ENCODE measurements at regions of chr14 and their contacts with region 1.

Region 1: DNA sequence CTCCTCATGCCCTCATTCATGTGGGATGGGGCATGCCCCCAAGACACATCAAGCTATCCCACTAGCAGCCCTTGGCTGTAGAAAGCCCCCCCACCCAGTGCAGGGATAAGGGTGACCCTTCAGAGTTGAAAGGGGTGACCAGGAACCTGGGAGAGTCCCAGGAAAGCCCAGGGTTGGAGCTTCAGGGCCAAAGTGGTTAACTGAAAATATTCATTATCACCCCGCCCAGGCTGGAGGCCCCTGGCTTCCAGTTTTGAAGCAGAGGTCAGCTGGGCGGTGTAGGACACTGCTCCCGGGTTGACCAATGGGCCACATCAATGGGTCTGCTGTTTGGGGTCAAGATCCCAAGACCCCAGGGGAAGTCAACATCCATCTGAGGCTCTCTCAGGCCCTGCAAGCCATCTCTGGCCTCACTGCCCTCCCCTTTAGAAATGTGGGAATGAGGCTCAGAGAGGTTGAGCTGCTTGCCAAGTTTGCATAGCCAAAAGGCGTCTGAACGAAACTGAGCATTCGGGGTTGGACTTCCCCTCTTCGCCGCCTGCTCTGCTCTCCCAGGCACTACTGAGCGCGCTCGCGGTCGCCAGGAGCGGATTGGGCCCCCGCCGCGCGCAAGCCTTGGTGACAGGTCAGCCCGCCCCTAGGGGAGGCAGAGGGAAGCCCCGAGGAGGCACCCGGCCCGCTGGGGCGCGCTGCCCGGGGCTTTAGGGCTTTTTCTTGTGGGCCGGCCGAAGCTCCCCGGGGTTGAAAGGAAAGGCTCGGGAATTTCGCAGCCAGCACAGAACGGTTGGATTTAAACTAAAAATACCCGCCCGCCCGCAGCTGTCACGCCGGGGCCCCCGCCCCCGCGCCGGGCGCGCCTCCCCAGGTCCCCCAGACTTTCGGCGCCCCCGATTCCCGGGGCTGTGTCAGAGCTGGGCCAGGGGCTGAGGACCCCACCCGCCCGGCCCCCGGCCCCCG is 576 bp downstream of the SYNE3 start:
- DNase-seq: peak; percentile 77 to 80
- ATAC-seq: peak; percentile 61 to 82 (median 76)
- H3K4me3 ChIP-seq: peak overlapping the region; percentile 36 to 86 (median 80)
- H3K27ac ChIP-seq: peak overlapping the region; percentile 67 to 95 (median 92)
- H3K4me1 ChIP-seq: peaks cover 24 to 78% (median 59%) of the 10 kb centered on the region in 9 donors
- H3K27me3 ChIP-seq: no peaks in the 10 kb centered on the region
- CTCF ChIP-seq: peak; percentile 16 to 58 (median 41)

Region 2: DNA sequence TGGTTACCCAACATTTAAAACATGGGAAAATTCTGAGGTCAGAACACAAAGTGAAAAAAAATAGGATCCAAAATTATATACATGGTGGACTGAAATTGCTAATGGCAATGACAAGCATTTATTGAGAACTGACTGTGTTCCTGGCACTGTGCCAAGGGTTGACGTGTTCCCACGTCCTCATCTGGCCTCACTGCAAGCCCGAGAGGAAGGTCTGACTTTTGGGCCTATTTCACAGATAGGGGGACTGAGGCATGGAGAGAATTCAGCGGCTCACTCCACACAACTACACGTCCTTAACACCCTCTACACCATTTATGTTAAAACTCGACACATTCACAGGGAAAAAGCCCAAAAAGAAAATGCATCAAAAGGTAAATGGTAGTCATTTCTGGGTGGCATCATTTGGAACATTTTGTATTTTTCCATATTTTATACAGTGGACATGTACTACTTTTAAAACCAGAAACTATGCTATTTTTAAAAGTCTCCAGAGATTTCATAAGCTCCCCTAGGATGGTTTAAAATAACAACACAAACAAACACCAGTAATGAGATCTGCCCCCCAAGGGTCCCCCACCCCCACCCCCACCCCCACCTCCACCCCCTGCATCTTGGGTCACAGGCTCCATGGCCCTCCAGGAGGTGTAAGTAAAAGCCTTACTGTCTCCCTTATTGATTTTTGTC is 223.9 kb before region 1 on chr14:
- intact Hi-C with region 1: no loop called
- DNase-seq: peak; percentile 76 to 88
- ATAC-seq: peak; percentile 49 to 82 (median 71)
- H3K4me3 ChIP-seq: no peak overlapping the region
- H3K27ac ChIP-seq: peak overlapping the region in 9 of 10 donors; percentile 42 to 84 (median 71)
- H3K4me1 ChIP-seq: peaks cover 14 to 30% (median 19%) of the 10 kb centered on the region in 9 donors
- H3K27me3 ChIP-seq: no peaks in the 10 kb centered on the region
- CTCF ChIP-seq: no peak

Region 3: GRCh38 chr14:95472819-95473251 is 43.0 kb before region 1 on chr14:
- intact Hi-C with region 1: loop called in 1 of 10 experiments (anchors 5 kb)
- DNase-seq: no peak
- ATAC-seq: peak in 5 of 8 donors; percentile 31 to 79 (median 38)
- H3K4me3 ChIP-seq: no peak overlapping the region
- H3K27ac ChIP-seq: peak overlapping the region in 4 of 10 donors; percentile 3 to 69 (median 26)
- H3K4me1 ChIP-seq: peaks cover 12 to 58% (median 35%) of the 10 kb centered on the region in 9 donors
- H3K27me3 ChIP-seq: no peaks in the 10 kb centered on the region
- CTCF ChIP-seq: no peak

Region 4: DNA sequence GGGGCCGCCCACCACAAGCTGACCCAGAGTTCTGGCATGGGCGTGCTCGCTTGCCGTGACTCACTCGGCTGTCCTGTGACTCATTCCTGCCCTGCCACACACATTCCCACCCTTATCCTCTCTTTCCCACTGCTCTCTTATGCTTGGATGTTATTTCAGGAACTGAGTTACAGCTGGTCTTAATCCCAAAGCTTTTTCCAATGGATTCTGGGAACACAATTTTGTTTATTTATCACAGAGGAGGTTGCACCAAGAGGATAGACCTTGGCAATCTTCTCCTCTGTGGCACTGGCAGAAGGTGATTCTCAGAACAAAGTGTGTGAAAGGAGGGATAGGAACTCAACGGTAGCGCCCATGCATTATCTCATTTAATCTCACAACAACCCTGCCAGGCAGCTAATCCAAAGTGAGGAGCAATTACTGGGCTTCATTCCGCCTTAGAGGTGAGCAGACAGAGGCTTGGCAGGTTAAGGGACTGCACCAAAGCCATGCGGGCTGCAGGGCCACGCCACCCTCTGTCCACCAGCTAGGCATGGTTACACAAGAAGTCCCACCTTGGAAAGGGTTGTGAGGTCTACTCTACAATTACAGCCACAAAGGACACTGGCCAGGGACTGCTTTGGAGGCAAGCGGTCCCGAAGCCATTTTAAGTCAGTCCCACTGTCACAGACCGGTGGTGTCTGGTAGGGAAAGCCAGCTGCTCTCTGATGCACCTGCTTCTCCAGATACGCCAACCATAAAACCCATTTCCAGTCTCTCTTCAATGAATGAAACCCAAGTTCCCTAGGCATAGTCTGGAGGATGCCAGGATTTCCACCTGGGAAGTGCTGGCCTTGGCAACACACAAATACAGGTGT is 32.3 kb before region 1 on chr14:
- intact Hi-C with region 1: loop called in 2 of 10 experiments (anchors 5 kb)
- DNase-seq: peak; percentile 73 to 74
- ATAC-seq: peak; percentile 80 to 94 (median 91)
- H3K4me3 ChIP-seq: no peak overlapping the region
- H3K27ac ChIP-seq: peak overlapping the region; percentile 1 to 89 (median 78)
- H3K4me1 ChIP-seq: peaks cover 14 to 66% (median 36%) of the 10 kb centered on the region in 9 donors
- H3K27me3 ChIP-seq: no peaks in the 10 kb centered on the region
- CTCF ChIP-seq: no peak

Region 5: DNA sequence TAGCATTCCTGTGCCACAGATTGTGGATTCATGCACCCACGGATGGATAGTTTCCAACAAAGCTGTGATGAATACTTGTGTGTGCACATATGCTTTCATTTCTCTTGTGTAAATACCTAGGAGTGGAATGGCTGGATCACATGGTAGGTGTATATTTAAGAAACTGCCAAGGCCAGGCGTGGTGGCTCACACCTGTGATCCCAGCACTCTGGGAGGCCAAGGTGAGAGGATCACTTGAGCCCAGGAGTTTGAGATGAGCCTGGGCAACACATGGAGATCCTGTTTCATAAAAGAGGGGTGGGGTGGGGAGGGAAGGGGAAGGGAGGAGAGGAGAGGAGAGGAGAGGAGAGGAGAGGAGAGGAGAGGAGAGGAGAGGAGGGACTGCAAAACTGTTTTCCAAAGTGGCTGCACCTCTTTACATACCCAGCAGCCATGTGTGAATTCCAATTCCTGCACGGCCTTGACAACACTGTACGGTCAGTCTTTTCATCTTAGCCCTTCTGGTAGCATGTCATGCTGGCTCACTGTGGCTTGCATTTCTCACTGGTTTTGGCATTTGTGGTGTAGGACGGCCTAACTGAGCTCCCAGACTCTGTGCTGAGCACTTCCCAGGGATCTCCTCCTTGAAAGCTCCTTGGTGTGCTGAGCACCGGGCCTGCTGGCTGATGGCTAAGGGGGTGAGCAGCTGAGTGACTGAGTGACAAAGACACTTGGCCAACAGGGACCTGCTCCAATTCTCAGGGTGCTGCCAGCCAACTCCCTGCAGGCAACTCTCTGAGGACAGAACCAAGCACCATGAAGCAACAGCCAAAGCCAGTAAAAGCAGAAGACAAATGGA is 27.3 kb before region 1 on chr14:
- intact Hi-C with region 1: loop called in 2 of 10 experiments (anchors 5 kb)
- DNase-seq: no peak
- ATAC-seq: peak in 7 of 8 donors; percentile 27 to 73 (median 62)
- H3K4me3 ChIP-seq: no peak overlapping the region
- H3K27ac ChIP-seq: peak overlapping the region in 7 of 10 donors; percentile 19 to 66 (median 48)
- H3K4me1 ChIP-seq: peaks cover 17 to 45% (median 34%) of the 10 kb centered on the region in 9 donors
- H3K27me3 ChIP-seq: no peaks in the 10 kb centered on the region
- CTCF ChIP-seq: no peak